Stomach (tissue), 19 donors: ENCODE measurements at regions of chr11 and their contacts with region 1.

Region 1: DNA sequence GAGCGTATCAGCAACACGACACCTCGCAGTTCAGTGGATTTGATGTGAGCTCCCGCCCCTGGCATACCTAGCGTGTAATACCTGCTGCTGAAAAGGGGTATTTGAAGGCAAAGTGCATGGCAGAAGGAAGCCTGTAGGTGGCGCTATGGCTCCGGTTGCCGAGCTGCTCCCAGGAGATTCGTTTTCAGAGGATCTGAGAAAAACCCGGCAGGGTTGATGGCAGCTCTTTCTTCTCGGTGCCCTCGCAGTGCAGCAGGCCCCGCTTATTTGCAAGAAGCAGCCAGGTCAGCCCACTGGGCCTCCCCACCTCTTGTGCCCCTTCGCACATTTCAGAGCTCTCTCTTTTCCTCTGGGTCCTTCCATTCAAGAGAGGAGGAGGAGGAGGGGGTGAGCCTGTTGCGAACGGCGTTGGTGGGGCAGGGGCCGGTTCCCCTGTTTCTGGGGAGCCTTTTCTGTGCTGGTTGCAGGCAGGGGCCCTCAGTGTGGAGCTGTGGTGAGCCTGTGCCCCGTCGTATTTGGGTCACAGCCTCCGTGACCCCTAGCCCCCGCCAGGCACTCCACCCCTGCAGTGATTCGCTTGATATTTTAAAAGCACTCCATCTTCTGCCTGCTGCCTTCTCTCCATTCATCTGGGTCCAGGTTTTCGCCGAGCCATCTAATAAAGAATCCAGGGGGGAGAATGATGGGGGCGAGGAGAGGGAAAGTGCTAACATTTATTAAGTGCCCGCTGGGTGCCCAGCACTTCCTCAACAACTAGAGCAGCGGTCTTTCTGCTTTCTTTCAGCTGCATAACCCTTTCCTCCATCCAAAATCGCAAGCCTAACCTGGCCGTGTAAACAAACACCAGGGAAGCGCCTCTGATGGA is 85.3 kb upstream of the SYT13 start:
- DNase-seq: peak; percentile 65 to 91
- H3K4me3 ChIP-seq: no peak overlapping the region
- H3K27ac ChIP-seq: no peak overlapping the region
- H3K4me1 ChIP-seq: peaks cover 0 to 10% (median 3%) of the 10 kb centered on the region in 4 donors
- H3K27me3 ChIP-seq: peaks cover 0 to 76% (median 17%) of the 10 kb centered on the region in 3 donors
- CTCF ChIP-seq: peak in 5 of 7 experiments; percentile 55 to 79 (median 72)
- EP300 ChIP-seq: no peak
- POLR2A ChIP-seq: no peak

Region 2: GRCh38 chr11:44611687-44612434 is 759.6 kb before region 1 on chr11:
- intact Hi-C with region 1: no loop called
- DNase-seq: no peak
- H3K4me3 ChIP-seq: no peak overlapping the region
- H3K27ac ChIP-seq: peak overlapping the region in 2 of 5 donors; percentile 19 to 42
- H3K4me1 ChIP-seq: peaks cover 22 to 84% (median 48%) of the 10 kb centered on the region in 4 donors
- H3K27me3 ChIP-seq: no peaks in the 10 kb centered on the region
- CTCF ChIP-seq: no peak
- EP300 ChIP-seq: no peak
- POLR2A ChIP-seq: no peak

Region 3: GRCh38 chr11:45655347-45655756 is 283.9 kb after region 1 on chr11:
- intact Hi-C with region 1: loop called (anchors 10 kb)
- DNase-seq: peak; percentile 72 to 93
- H3K4me3 ChIP-seq: no peak overlapping the region
- H3K27ac ChIP-seq: no peak overlapping the region
- H3K4me1 ChIP-seq: peaks cover 0 to 28% (median 12%) of the 10 kb centered on the region in 4 donors
- H3K27me3 ChIP-seq: peaks cover 0 to 69% (median 40%) of the 10 kb centered on the region in 3 donors
- CTCF ChIP-seq: peak in 5 of 7 experiments; percentile 70 to 87 (median 83)
- EP300 ChIP-seq: no peak
- POLR2A ChIP-seq: no peak